ENCODE measurements at regions of chr19 and their contacts with region 1.

Region 1: GRCh38 chr19:6632002-6632621 is 37.8 kb downstream of the TNFSF14 start:
- DNase-seq: peak; percentile 92
- ATAC-seq: peak; percentile 89
- H3K4me3 Mint-ChIP-seq: no peak overlapping the region
- H3K27ac Mint-ChIP-seq: no peak overlapping the region
- H3K4me1 Mint-ChIP-seq: peaks cover 26% of the 10 kb centered on the region
- H3K27me3 Mint-ChIP-seq: peaks cover 4% of the 10 kb centered on the region
- CTCF ChIP-seq: peak; percentile 81

Region 2: GRCh38 chr19:6460101-6460853 is 171.8 kb before region 1 on chr19:
- CTCF ChIA-PET with region 1: no interaction called
- POLR2A ChIA-PET with region 1: no interaction called
- intact Hi-C with region 1: no loop called
- DNase-seq: peak; percentile 98
- ATAC-seq: peak; percentile 89
- H3K4me3 Mint-ChIP-seq: peak overlapping the region; percentile 83
- H3K27ac Mint-ChIP-seq: peak overlapping the region; percentile 68
- H3K4me1 Mint-ChIP-seq: peaks cover 23% of the 10 kb centered on the region
- H3K27me3 Mint-ChIP-seq: no peaks in the 10 kb centered on the region
- CTCF ChIP-seq: peak; percentile 53

Region 3: GRCh38 chr19:6516659-6517291 is 115.3 kb before region 1 on chr19:
- CTCF ChIA-PET with region 1: interaction called, 37 read pairs
- POLR2A ChIA-PET with region 1: no interaction called
- intact Hi-C with region 1: loop called (anchors 5 kb)
- DNase-seq: peak; percentile 95
- ATAC-seq: peak; percentile 76
- H3K4me3 Mint-ChIP-seq: peak overlapping the region; percentile 85
- H3K27ac Mint-ChIP-seq: peak overlapping the region; percentile 89
- H3K4me1 Mint-ChIP-seq: peaks cover 32% of the 10 kb centered on the region
- H3K27me3 Mint-ChIP-seq: peaks cover 1% of the 10 kb centered on the region
- CTCF ChIP-seq: peak; percentile 96

Region 4: GRCh38 chr19:6649185-6649584 is 17.1 kb after region 1 on chr19:
- CTCF ChIA-PET with region 1: interaction called, 13 read pairs
- POLR2A ChIA-PET with region 1: no interaction called
- intact Hi-C with region 1: no loop called
- DNase-seq: no peak
- ATAC-seq: no peak
- H3K4me3 Mint-ChIP-seq: no peak overlapping the region
- H3K27ac Mint-ChIP-seq: no peak overlapping the region
- H3K4me1 Mint-ChIP-seq: peaks cover 27% of the 10 kb centered on the region
- H3K27me3 Mint-ChIP-seq: no peaks in the 10 kb centered on the region
- CTCF ChIP-seq: no peak

Region 5: GRCh38 chr19:6654347-6655310 is 22.5 kb after region 1 on chr19:
- CTCF ChIA-PET with region 1: interaction called, 13 read pairs
- POLR2A ChIA-PET with region 1: no interaction called
- intact Hi-C with region 1: no loop called
- DNase-seq: peak; percentile 88
- ATAC-seq: peak; percentile 80
- H3K4me3 Mint-ChIP-seq: peak overlapping the region; percentile 71
- H3K27ac Mint-ChIP-seq: peak overlapping the region; percentile 95
- H3K4me1 Mint-ChIP-seq: peaks cover 57% of the 10 kb centered on the region
- H3K27me3 Mint-ChIP-seq: no peaks in the 10 kb centered on the region
- CTCF ChIP-seq: no peak

Region 6: GRCh38 chr19:6663236-6664201 is 31.4 kb after region 1 on chr19:
- CTCF ChIA-PET with region 1: interaction called, 10 read pairs
- POLR2A ChIA-PET with region 1: no interaction called
- intact Hi-C with region 1: no loop called
- DNase-seq: peak; percentile 74
- ATAC-seq: peak; percentile 40
- H3K4me3 Mint-ChIP-seq: no peak overlapping the region
- H3K27ac Mint-ChIP-seq: no peak overlapping the region
- H3K4me1 Mint-ChIP-seq: peaks cover 22% of the 10 kb centered on the region
- H3K27me3 Mint-ChIP-seq: no peaks in the 10 kb centered on the region
- CTCF ChIP-seq: no peak

Region 7: DNA sequence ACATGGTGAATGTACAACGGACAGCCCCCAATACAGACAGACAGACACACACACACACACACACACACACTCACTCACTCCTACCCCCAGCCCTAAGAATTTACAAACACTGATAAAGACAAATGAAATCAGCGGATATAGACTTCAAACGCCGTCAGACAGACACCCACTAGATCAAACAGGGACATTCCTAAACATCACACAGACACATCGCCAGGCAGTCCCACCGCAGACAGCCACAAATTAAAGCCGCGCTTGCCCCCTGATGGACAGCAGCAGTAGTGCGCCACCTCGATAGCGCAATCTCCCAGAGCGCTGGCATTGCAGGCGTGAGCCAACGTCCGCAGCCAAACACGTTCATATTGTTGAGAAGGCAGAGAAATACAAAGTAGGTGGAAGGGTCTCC is 230.6 kb after region 1 on chr19:
- CTCF ChIA-PET with region 1: interaction called, 25 read pairs
- POLR2A ChIA-PET with region 1: no interaction called
- intact Hi-C with region 1: loop called (anchors 2 kb)
- DNase-seq: peak; percentile 97
- ATAC-seq: peak; percentile 88
- H3K4me3 Mint-ChIP-seq: peak overlapping the region; percentile 77
- H3K27ac Mint-ChIP-seq: peak overlapping the region; percentile 79
- H3K4me1 Mint-ChIP-seq: peaks cover 14% of the 10 kb centered on the region
- H3K27me3 Mint-ChIP-seq: no peaks in the 10 kb centered on the region
- CTCF ChIP-seq: peak; percentile 81